ENCODE measurements at regions of chr3 and their contacts with region 1.

Region 1: DNA sequence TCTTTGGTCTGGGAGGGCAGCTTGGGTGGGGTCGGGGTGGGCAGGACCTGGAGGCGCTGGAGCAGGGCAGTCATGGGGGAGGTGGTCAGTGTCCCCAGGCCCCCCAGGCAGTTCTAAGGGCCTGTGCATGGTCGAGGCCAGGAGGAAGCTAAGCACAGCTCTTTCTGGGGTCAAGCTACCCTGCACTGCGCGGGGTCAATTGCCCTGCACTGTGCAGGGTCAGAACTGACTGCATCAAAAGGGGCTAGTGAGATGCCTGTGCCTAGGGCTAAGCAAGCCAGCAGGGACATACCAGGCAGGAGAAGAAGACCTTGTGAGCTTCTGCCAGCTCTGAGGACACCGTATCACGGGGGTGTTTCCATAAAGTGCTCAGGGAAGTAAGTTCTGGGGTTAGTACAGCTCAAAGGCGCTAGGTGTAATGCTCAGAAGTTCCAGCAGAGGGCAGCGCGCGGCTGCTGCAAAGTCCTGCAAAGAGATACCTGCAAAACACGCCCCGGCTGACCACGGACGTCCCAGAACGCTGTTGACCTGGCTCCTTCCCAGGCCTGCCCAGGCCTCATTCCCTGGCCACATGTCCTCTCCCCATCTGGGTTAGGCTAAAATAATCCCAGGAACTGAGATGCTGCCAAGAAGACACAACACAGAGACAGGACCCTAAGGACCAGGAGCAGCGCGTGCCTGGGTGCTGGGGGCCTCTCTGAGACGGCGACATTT is 18.8 kb upstream of the IQSEC1 start:
- DNase-seq: peak; percentile 66 to 91 (median 82)
- ATAC-seq: peak; percentile 94
- H3K4me3 ChIP-seq: no peak overlapping the region
- H3K4me3 Mint-ChIP-seq: no peak overlapping the region
- H3K27ac ChIP-seq: no peak overlapping the region
- H3K27ac Mint-ChIP-seq: peak overlapping the region; percentile 5
- H3K4me1 ChIP-seq: peaks cover 6% of the 10 kb centered on the region
- H3K4me1 Mint-ChIP-seq: peaks cover 4% of the 10 kb centered on the region
- H3K27me3 ChIP-seq: no peaks in the 10 kb centered on the region
- H3K27me3 Mint-ChIP-seq: peaks cover 15% of the 10 kb centered on the region
- CTCF ChIP-seq: peak; percentile 93

Region 2: DNA sequence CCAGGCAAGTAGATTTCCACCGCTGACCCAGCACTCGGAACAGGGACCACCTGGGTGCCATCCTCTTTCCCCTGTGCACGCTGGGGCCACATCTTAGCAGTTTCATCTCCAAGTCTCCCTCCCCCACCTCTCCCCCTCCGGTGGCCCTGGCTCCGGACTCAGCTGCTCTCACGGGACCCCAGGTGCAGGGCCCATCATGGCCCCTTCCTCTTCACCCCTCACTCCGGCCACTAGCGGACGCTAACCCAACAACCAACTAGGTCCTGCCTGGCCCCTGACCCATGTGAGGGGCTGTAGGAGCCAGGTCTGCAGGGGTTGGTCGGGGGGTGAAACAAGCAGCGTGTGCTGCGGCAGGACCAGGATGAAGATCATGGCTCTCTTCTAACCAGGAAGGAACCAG is 12.5 kb after region 1 on chr3:
- CTCF ChIA-PET with region 1: interaction called, 17 read pairs
- POLR2A ChIA-PET with region 1: no interaction called
- intact Hi-C with region 1: no loop called
- DNase-seq: no peak
- ATAC-seq: no peak
- H3K4me3 ChIP-seq: no peak overlapping the region
- H3K4me3 Mint-ChIP-seq: no peak overlapping the region
- H3K27ac ChIP-seq: no peak overlapping the region
- H3K27ac Mint-ChIP-seq: no peak overlapping the region
- H3K4me1 ChIP-seq: no peaks in the 10 kb centered on the region
- H3K4me1 Mint-ChIP-seq: no peaks in the 10 kb centered on the region
- H3K27me3 ChIP-seq: no peaks in the 10 kb centered on the region
- H3K27me3 Mint-ChIP-seq: no peaks in the 10 kb centered on the region
- CTCF ChIP-seq: no peak

Region 3: GRCh38 chr3:13282986-13283876 is 191.2 kb after region 1 on chr3:
- CTCF ChIA-PET with region 1: no interaction called
- POLR2A ChIA-PET with region 1: no interaction called
- intact Hi-C with region 1: loop called in 1 of 2 experiments (anchors 10 kb)
- DNase-seq: peak in 2 of 9 experiments; percentile 36 to 41
- ATAC-seq: peak; percentile 51
- H3K4me3 ChIP-seq: no peak overlapping the region
- H3K4me3 Mint-ChIP-seq: peak overlapping the region; percentile 74
- H3K27ac ChIP-seq: no peak overlapping the region
- H3K27ac Mint-ChIP-seq: no peak overlapping the region
- H3K4me1 ChIP-seq: peaks cover 10% of the 10 kb centered on the region
- H3K4me1 Mint-ChIP-seq: peaks cover 5% of the 10 kb centered on the region
- H3K27me3 ChIP-seq: peaks cover 23 to 29% of the 10 kb centered on the region in 2 experiments
- H3K27me3 Mint-ChIP-seq: peaks cover 44% of the 10 kb centered on the region
- CTCF ChIP-seq: no peak

Region 4: GRCh38 chr3:13461169-13462158 is 369.4 kb after region 1 on chr3:
- CTCF ChIA-PET with region 1: interaction called, 29 read pairs
- POLR2A ChIA-PET with region 1: no interaction called
- intact Hi-C with region 1: loop called in 1 of 2 experiments (anchors 1 kb)
- DNase-seq: peak; percentile 49 to 86 (median 80)
- ATAC-seq: peak; percentile 98
- H3K4me3 ChIP-seq: no peak overlapping the region
- H3K4me3 Mint-ChIP-seq: no peak overlapping the region
- H3K27ac ChIP-seq: no peak overlapping the region
- H3K27ac Mint-ChIP-seq: peak overlapping the region; percentile 55
- H3K4me1 ChIP-seq: no peaks in the 10 kb centered on the region
- H3K4me1 Mint-ChIP-seq: peaks cover 3% of the 10 kb centered on the region
- H3K27me3 ChIP-seq: no peaks in the 10 kb centered on the region
- H3K27me3 Mint-ChIP-seq: peaks cover 8% of the 10 kb centered on the region
- CTCF ChIP-seq: peak; percentile 90

Measured in CD8-positive, alpha-beta T cell (primary cell).